ENCODE measurements at regions of chr4 and their contacts with region 1.

Region 1: DNA sequence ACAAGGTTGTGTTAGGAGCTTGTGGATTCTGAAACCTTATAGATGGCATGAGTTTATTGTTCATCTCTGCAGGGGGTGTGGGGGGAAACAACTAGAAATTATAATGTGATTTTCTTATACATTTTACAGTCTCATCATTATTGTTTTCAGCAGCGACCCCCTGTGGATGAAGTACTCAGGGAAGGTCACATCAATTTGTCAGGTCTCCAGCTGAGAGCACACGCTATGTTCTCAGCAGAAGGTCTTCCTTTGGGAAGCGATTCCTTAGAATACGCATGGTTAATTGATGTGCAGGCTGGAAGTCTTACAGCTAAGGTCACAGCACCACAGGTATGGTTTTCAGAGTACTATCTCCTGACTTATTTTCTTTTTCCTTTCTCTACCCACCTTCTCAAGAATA is 72.2 kb downstream of the BLTP1 start:
- DNase-seq: no peak
- ATAC-seq: no peak
- H3K4me3 ChIP-seq: no peak overlapping the region
- H3K27ac ChIP-seq: no peak overlapping the region
- H3K4me1 ChIP-seq: no peaks in the 10 kb centered on the region
- H3K27me3 ChIP-seq: no peaks in the 10 kb centered on the region
- CTCF ChIP-seq: peak in 6 of 12 donors; percentile 12 to 47 (median 25)
- POLR2A ChIP-seq: no peak

Region 2: DNA sequence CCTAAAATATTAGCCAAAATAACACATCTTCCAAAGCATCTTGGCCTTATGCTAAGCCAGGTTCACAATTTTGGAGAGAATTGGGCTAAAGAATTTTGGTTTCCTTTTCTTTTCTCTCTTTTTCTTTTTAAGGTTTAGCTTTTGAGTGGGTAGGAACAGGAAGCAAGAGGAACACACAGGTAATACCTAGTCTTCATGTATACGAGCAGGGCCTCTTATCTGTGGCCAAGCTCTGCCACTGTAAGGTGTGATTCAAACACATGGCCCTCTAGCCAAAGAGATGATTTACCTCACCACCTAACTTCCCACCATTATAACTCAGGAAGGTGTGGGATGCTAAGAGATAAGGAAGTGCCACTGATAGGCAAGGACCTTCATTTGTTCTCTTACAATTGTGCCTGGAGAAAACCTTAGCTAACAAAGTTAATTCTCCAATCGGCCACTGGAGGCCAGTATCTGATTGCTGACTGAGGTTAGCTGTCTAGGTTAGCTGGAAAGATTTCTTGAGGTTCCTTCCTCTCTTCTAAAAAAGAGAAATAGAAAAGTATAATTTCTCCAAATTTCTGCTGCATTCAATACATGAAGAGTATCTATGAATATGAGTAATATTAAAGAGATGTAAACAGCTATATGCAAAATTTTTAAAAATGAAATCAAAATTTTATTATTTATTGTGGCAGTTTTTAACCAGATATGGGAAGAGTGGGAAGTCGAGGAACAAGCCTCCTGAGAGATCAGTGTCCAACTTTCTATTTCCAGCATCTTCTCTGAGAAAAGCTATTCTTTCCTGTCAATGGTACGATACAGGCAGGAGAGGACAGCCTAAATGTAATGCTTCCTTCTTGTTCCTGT is 324.0 kb before region 1 on chr4:
- intact Hi-C with region 1: loop called in 4 of 10 experiments (anchors 5 to 10 kb)
- DNase-seq: peak in 4 of 5 donors; percentile 21 to 29 (median 24)
- ATAC-seq: peak in 2 of 4 donors; percentile 46 to 68
- H3K4me3 ChIP-seq: no peak overlapping the region
- H3K27ac ChIP-seq: no peak overlapping the region
- H3K4me1 ChIP-seq: no peaks in the 10 kb centered on the region
- H3K27me3 ChIP-seq: peaks cover 0 to 14% (median 0%) of the 10 kb centered on the region in 9 donors
- CTCF ChIP-seq: peak; percentile 50 to 76 (median 64)
- POLR2A ChIP-seq: no peak

Region 3: DNA sequence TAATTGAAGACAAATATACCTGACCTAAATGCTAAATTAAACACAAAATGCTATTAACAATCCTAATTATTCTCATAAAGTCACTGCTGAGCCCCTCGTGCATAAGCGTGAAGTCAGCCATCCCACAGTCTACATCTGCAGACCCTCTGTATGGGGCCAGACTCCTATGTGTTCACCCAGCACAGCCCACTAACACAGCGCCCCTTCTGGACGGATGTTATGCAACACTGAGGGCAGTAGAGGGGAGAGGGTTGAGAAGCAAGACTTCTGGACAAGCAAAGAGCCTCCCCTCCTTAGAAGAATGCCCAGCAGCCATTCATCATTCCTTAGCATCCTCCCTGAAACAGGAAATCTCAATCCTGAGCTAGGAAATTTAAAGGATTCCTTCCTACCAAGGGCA is 280.4 kb before region 1 on chr4:
- intact Hi-C with region 1: loop called in 2 of 10 experiments (anchors 5 to 10 kb)
- DNase-seq: no peak
- ATAC-seq: no peak
- H3K4me3 ChIP-seq: no peak overlapping the region
- H3K27ac ChIP-seq: no peak overlapping the region
- H3K4me1 ChIP-seq: peaks cover 0 to 3% (median 0%) of the 10 kb centered on the region in 12 donors
- H3K27me3 ChIP-seq: peaks cover 0 to 44% (median 15%) of the 10 kb centered on the region in 9 donors
- CTCF ChIP-seq: no peak
- POLR2A ChIP-seq: no peak

Region 4: DNA sequence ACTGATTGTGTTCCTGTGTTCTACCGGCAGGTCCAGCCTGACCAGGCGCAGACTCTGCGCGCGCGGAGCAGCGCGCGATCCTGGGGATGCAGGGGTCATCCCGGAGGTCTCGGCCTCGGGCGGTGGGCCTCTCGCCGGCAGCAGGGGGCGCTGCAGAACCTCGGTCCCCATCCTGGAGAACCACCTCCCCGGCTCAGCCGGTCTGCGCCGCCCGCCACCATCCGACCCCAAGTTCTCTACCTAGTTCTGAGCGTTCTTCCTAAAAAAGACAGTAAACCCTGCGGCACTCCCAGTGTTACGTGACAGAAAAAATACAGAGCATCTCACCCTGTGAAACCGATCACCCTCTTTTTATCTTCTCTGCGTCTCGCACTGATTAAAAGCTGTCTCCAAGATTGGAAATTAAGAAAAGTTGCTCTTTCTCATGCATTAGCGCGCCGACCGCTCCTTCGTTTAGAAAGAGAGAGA is 274.1 kb before region 1 on chr4:
- intact Hi-C with region 1: loop called in 5 of 10 experiments (anchors 5 to 10 kb)
- DNase-seq: peak; percentile 74 to 87 (median 76)
- ATAC-seq: peak; percentile 77 to 96 (median 86)
- H3K4me3 ChIP-seq: peak overlapping the region; percentile 50 to 74 (median 63)
- H3K27ac ChIP-seq: peak overlapping the region in 1 of 12 donors; percentile 13
- H3K4me1 ChIP-seq: peaks cover 0 to 23% (median 7%) of the 10 kb centered on the region in 12 donors
- H3K27me3 ChIP-seq: peaks cover 0 to 47% (median 22%) of the 10 kb centered on the region in 9 donors
- CTCF ChIP-seq: peak; percentile 58 to 86 (median 73)
- POLR2A ChIP-seq: no peak

Region 5: DNA sequence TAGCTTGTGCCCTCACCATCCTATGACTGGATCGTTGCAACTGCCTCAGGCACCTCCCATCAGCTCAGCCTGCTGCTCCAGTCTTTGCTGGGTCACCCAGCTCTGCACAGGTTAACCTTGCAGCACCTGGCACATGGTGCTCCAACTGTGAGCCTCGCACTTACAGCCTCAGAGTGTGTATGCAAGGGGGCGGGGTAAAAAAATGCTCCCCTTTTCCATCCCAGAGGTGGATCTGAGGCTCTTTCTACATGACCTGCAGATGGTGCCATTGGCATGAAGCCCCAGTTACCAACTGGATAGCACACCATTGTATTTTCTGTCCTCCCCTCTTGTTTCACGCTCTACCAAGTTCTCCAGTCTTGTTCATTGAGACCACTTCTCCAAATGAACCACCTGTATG is 226.3 kb before region 1 on chr4:
- intact Hi-C with region 1: loop called in 2 of 10 experiments (anchors 5 to 10 kb)
- DNase-seq: peak in 1 of 5 donors; percentile 25
- ATAC-seq: peak in 2 of 4 donors; percentile 59 to 66
- H3K4me3 ChIP-seq: no peak overlapping the region
- H3K27ac ChIP-seq: no peak overlapping the region
- H3K4me1 ChIP-seq: no peaks in the 10 kb centered on the region
- H3K27me3 ChIP-seq: peaks cover 0 to 7% (median 0%) of the 10 kb centered on the region in 9 donors
- CTCF ChIP-seq: peak in 10 of 12 donors; percentile 11 to 50 (median 36)
- POLR2A ChIP-seq: no peak

Region 6: GRCh38 chr4:122003335-122003734 is 221.0 kb before region 1 on chr4:
- intact Hi-C with region 1: loop called in 2 of 10 experiments (anchors 5 to 10 kb)
- DNase-seq: no peak
- ATAC-seq: peak in 1 of 4 donors; percentile 18
- H3K4me3 ChIP-seq: no peak overlapping the region
- H3K27ac ChIP-seq: no peak overlapping the region
- H3K4me1 ChIP-seq: no peaks in the 10 kb centered on the region
- H3K27me3 ChIP-seq: peaks cover 0 to 7% (median 0%) of the 10 kb centered on the region in 9 donors
- CTCF ChIP-seq: peak in 5 of 12 donors; percentile 8 to 23 (median 19)
- POLR2A ChIP-seq: no peak

Region 7: DNA sequence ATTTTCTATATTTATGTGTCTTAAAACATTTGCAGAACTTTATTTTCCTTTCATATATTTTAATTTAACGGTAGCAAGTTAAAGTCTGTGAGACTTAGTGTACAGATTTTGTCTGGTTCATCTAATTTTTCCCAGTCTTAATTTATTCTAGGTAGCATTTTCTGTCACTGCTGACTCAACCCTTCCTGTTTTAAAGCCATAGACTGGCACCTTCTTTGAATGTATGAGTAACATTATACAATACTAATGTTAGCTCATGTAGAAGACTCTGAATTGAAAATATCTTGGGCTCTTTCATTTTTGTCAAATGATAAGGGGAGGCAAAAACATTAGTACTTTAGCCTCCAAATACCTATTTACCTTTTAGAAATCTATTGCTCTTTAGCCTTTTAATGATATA is 28.6 kb before region 1 on chr4:
- intact Hi-C with region 1: no loop called
- DNase-seq: no peak
- ATAC-seq: no peak
- H3K4me3 ChIP-seq: no peak overlapping the region
- H3K27ac ChIP-seq: no peak overlapping the region
- H3K4me1 ChIP-seq: no peaks in the 10 kb centered on the region
- H3K27me3 ChIP-seq: no peaks in the 10 kb centered on the region
- CTCF ChIP-seq: no peak
- POLR2A ChIP-seq: no peak

Measured in heart left ventricle (tissue), 16 donors.